CD8-positive, alpha-beta T cell (primary cell): ENCODE measurements at regions of chr9 and their contacts with region 1.

Region 1: DNA sequence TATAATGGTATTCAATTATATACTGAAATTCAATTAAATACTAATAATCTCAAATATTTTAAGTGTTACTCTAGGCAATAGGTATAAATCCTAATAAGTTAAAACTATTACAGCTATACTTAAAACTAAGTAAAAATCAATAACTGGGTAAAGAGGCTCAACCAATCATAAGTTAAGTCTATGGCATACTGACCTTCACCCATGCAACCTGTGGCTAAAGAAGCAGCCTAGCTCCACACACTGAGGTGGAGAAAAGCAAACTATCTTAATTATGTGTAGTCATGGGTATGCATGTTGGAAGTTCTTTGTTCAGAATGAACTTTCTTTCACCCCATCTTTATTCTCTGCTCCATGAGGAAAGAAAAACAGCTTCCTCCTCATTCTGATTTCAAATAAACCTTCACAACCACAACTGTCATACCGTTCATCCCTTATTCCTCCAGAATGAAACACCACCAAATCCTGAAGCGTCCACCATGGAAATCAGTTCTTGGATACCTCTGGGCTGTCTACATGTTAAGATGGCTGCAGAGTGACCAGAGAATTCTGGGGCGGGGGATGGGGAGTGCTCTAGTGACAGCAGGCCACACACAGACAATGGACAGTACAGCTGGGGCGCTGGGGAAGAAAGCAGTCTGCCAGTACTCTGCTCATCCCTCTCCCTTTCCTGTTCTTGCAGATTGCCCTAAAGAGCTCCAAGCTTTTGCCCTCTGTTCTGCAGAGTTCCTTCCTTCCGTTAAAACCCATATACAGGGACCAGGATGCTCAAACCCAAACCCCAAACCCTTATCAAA is 62.3 kb downstream of the RIGI start:
- DNase-seq: no peak
- ATAC-seq: no peak
- H3K4me3 ChIP-seq: no peak overlapping the region
- H3K4me3 Mint-ChIP-seq: no peak overlapping the region
- H3K27ac ChIP-seq: no peak overlapping the region
- H3K27ac Mint-ChIP-seq: no peak overlapping the region
- H3K4me1 ChIP-seq: no peaks in the 10 kb centered on the region
- H3K4me1 Mint-ChIP-seq: no peaks in the 10 kb centered on the region
- H3K27me3 ChIP-seq: no peaks in the 10 kb centered on the region
- H3K27me3 Mint-ChIP-seq: no peaks in the 10 kb centered on the region
- CTCF ChIP-seq: no peak

Region 2: DNA sequence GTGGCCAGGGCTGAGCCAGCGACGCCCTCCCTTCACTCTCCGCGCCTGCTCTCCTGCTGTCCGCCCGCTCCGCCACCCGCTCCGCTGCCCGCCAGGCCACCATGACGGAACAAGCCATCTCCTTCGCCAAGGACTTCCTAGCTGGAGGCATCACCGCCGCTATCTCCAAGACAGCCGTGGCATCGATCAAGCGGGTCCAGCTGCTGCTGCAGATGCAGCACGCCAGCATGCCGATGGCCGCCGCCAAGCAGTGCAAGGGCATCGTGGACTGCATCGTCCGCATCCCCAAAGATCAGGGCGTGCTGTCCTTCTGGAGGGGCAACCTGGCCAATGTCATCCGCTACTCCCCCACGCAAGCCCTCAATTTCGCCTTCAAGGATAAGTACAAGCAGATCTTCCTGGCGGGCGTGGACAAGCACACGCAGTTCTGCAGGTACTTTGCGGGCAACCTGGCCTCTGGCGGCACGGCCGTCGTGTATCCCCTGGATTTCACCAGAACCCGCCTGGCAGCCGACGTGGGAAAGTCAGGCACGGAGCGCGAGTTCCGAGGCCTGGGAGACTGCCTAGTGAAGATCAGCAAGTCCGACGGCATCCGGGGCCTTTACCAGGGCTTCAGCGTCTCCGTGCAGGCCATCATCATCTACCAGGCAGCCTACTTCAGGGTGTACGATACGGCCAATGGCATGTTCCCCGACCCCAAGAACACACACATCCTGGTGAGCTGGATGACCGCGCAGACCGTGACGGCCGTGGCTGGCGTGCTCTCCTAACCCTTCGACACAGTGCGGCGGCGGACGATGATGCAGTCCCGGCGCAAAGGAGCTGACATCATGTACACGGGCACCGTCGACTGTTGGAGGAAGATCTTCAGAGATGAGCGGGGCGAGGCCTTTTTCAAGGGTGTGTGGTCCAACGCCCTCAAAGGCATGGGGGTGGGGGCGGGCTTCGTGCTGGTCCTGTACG is 1209.6 kb before region 1 on chr9:
- CTCF ChIA-PET with region 1: no interaction called
- POLR2A ChIA-PET with region 1: no interaction called
- intact Hi-C with region 1: no loop called
- DNase-seq: no peak
- ATAC-seq: no peak
- H3K4me3 ChIP-seq: no peak overlapping the region
- H3K4me3 Mint-ChIP-seq: no peak overlapping the region
- H3K27ac ChIP-seq: no peak overlapping the region
- H3K27ac Mint-ChIP-seq: no peak overlapping the region
- H3K4me1 ChIP-seq: peaks cover 5% of the 10 kb centered on the region
- H3K4me1 Mint-ChIP-seq: no peaks in the 10 kb centered on the region
- H3K27me3 ChIP-seq: no peaks in the 10 kb centered on the region
- H3K27me3 Mint-ChIP-seq: no peaks in the 10 kb centered on the region
- CTCF ChIP-seq: no peak

Region 3: DNA sequence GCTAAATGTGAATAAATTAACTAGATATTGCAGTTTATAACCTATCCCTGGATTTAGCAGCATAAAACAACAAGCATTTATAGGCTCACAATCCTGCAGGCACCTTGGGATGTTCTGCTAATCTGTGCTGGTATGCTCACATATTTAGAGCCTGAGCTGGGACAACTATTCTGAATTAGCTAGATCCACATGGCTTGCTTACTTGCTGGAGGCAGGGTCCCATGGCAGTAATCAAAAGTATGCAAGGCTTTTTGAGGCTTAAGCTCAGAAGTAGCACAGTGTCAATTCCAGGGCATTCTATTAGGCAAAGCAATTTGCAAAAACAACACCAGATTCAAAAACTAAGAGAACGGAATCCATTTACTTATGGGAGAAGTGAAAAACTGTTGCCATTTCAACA is 824.2 kb before region 1 on chr9:
- CTCF ChIA-PET with region 1: no interaction called
- POLR2A ChIA-PET with region 1: no interaction called
- intact Hi-C with region 1: no loop called
- DNase-seq: no peak
- ATAC-seq: no peak
- H3K4me3 ChIP-seq: no peak overlapping the region
- H3K4me3 Mint-ChIP-seq: no peak overlapping the region
- H3K27ac ChIP-seq: no peak overlapping the region
- H3K27ac Mint-ChIP-seq: no peak overlapping the region
- H3K4me1 ChIP-seq: no peaks in the 10 kb centered on the region
- H3K4me1 Mint-ChIP-seq: no peaks in the 10 kb centered on the region
- H3K27me3 ChIP-seq: no peaks in the 10 kb centered on the region
- H3K27me3 Mint-ChIP-seq: no peaks in the 10 kb centered on the region
- CTCF ChIP-seq: no peak

Region 4: DNA sequence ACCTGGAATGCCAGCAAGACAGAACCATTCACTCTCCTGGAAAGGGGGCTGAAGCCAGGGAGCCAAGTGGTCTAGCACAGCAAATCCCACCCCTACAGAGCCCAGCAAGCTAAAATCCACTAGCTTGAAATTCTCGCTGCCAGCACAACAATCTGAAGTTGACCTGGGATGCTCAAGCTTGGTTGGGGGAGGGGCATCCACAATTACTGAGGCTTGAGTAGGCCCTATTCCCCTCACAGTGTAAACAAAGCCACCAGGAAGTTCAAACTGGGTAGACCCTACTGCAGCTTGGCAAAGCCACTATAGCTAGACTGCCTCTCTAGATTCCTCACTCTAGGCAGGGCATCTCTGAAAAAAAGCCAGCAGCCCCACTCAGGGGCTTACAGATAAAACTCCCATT is 45.0 kb after region 1 on chr9:
- CTCF ChIA-PET with region 1: no interaction called
- POLR2A ChIA-PET with region 1: no interaction called
- intact Hi-C with region 1: loop called in 1 of 2 experiments (anchors 5 kb)
- DNase-seq: no peak
- ATAC-seq: no peak
- H3K4me3 ChIP-seq: no peak overlapping the region
- H3K4me3 Mint-ChIP-seq: no peak overlapping the region
- H3K27ac ChIP-seq: no peak overlapping the region
- H3K27ac Mint-ChIP-seq: no peak overlapping the region
- H3K4me1 ChIP-seq: no peaks in the 10 kb centered on the region
- H3K4me1 Mint-ChIP-seq: peaks cover 56% of the 10 kb centered on the region
- H3K27me3 ChIP-seq: no peaks in the 10 kb centered on the region
- H3K27me3 Mint-ChIP-seq: no peaks in the 10 kb centered on the region
- CTCF ChIP-seq: no peak

Region 5: DNA sequence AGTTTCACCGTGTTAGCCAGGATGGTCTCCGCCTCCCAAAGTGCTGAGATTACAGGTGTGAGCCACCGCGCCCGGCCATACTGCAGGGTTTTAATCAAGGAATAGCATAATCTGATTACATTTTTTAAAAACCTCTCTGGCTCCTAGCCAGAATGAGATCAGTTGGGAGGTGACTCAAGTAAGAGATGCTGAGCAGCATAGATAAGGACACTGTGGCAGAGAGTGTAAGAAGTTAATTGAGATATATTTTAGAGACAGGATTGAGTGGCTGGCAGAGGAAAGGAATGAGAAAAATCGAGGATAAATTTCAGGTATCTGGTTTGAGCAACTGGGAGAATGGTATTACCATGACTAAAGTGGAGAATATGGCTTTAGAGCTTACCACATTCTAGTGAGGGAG is 69.6 kb after region 1 on chr9:
- CTCF ChIA-PET with region 1: no interaction called
- POLR2A ChIA-PET with region 1: no interaction called
- intact Hi-C with region 1: no loop called
- DNase-seq: no peak
- ATAC-seq: no peak
- H3K4me3 ChIP-seq: no peak overlapping the region
- H3K4me3 Mint-ChIP-seq: no peak overlapping the region
- H3K27ac ChIP-seq: no peak overlapping the region
- H3K27ac Mint-ChIP-seq: peak overlapping the region; percentile 23
- H3K4me1 ChIP-seq: no peaks in the 10 kb centered on the region
- H3K4me1 Mint-ChIP-seq: no peaks in the 10 kb centered on the region
- H3K27me3 ChIP-seq: no peaks in the 10 kb centered on the region
- H3K27me3 Mint-ChIP-seq: no peaks in the 10 kb centered on the region
- CTCF ChIP-seq: no peak